ENCODE measurements at regions of chr10 and their contacts with region 1.

Region 1: GRCh38 chr10:21184216-21184615 is 287.1 kb upstream of the NEBL start:
- DNase-seq: no peak

Region 2: GRCh38 chr10:19426034-19426433 is 1758.2 kb before region 1 on chr10:
- intact Hi-C with region 1: loop called in 1 of 2 experiments (anchors 5 kb)
- DNase-seq: no peak

Region 3: GRCh38 chr10:20181434-20181833 is 1002.8 kb before region 1 on chr10:
- intact Hi-C with region 1: no loop called
- DNase-seq: no peak

Region 4: DNA sequence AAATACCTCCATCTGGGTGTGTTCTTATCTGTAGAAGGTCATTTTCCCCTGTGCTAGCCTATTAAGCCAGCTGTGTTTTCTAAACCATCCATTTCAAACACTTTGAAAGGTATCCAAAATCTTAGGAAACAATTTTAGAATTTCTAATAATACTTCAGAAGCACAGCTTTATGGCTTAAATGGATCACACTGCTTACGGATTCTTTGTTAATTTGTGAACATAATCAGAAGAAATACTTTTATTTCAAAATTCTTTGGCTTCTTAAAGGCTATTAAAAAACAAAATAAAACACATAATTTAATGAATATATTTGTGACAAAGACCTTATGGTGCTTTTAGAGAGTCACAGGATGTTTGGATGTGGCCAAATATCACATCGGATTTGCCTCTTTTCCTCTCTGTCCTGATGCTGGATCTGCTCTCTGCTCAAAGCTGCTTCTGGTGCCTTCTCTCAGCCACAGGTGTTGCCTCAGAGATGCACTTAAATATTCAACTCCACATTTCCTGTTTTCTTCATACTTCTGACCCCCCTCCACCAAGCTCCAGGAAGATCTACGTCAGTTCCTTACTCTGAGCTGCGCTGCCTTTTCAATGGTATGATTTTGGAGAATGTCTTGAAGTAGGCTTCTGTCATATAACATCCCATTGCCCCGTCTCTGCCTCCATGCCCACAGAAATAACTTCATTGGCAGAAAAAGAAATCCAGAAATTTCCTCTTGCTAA is 580.4 kb after region 1 on chr10:
- intact Hi-C with region 1: no loop called
- DNase-seq: no peak

Region 5: GRCh38 chr10:22259280-22259679 is 1075.1 kb after region 1 on chr10:
- intact Hi-C with region 1: no loop called
- DNase-seq: no peak

Measured in posterior vena cava (tissue), 2 donors.